ENCODE measurements at regions of chr19 and their contacts with region 1.

Region 1: GRCh38 chr19:46825525-46825971 is 25.1 kb downstream of the AP2S1 start:
- DNase-seq: no peak
- H3K4me3 ChIP-seq: no peak overlapping the region
- H3K27ac ChIP-seq: peak overlapping the region in 1 of 4 donors; percentile 67
- H3K4me1 ChIP-seq: peaks cover 7 to 23% (median 17%) of the 10 kb centered on the region in 4 donors
- H3K27me3 ChIP-seq: no peaks in the 10 kb centered on the region
- CTCF ChIP-seq: no peak
- EP300 ChIP-seq: no peak
- POLR2A ChIP-seq: no peak

Region 2: DNA sequence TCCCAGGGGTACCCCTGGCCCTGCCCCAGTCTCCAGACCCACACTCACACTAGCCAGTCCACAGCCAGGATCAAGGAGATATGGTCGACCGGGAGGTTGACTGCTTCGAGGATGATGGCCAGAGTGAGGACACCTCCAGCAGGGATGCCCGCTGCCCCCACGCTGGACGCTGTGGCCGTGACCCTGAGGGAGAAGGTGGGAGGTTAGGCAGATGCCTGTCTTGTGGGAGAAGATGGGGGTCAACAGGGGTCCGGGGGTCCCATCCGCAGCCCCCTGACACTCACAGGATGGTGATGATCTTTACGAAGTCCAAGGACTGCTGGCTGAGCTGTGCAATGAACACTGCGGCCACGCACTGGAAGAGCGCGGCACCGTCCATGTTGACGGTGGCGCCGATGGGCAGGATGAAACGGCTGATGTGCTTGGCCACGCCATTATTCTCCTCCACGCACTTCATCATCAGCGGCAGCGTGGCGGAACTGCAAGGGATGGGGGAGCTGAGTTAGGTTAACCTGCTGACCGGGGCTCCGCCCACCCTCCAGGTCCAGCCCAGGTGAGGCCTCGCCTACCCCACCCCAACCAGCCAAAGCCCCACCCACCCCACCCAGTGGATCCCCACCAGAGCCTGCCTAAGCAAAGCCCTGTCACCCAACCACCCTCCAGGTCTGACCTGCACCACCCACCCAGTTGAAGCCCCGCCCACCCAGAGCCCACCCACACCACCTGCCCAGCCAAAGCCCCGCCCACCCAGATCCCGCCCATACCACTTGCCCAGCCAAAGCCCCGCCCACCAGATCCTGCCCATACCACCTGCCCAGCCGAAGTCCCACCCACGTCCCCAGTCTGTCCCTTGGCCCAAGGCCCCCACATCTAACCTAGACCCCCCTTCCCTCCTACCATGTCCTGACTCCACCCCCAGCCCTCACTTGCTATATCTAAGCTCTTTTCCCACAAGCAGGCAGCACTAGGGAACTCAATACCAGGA is 48.3 kb before region 1 on chr19:
- in situ Hi-C with region 1: loop called in 1 of 4 experiments (anchors 5 kb)
- intact Hi-C with region 1: no loop called
- DNase-seq: no peak
- H3K4me3 ChIP-seq: no peak overlapping the region
- H3K27ac ChIP-seq: no peak overlapping the region
- H3K4me1 ChIP-seq: peaks cover 0 to 7% (median 1%) of the 10 kb centered on the region in 4 donors
- H3K27me3 ChIP-seq: no peaks in the 10 kb centered on the region
- CTCF ChIP-seq: no peak
- EP300 ChIP-seq: no peak
- POLR2A ChIP-seq: no peak

Measured in transverse colon (tissue), 4 donors.